ENCODE measurements at regions of chr2 and their contacts with region 1.

Region 1: DNA sequence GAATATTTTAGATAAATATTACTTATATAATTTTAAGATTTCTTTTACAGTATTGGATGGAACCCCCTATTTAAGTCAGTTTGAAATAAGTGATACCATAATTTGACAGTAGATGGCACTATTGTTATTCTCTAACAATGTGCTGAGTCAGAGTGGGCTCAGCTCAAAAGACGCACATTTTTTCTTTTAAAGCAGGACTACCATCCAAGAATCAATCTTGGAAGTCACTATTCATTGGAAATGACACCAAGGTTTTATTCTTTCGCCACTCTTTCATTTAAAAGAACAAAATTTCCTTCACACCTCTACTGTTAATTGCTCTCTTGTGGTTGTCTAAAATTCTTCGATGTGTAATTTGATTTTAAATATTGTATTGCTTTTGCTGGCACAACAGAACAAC is 32.6 kb upstream of the SPAG16 start:
- DNase-seq: peak in 2 of 4 donors; percentile 57 to 67
- ATAC-seq: peak; percentile 75
- H3K4me3 ChIP-seq: no peak overlapping the region
- H3K27ac ChIP-seq: no peak overlapping the region
- H3K4me1 ChIP-seq: no peaks in the 10 kb centered on the region
- H3K27me3 ChIP-seq: no peaks in the 10 kb centered on the region
- CTCF ChIP-seq: peak; percentile 44 to 66

Region 2: DNA sequence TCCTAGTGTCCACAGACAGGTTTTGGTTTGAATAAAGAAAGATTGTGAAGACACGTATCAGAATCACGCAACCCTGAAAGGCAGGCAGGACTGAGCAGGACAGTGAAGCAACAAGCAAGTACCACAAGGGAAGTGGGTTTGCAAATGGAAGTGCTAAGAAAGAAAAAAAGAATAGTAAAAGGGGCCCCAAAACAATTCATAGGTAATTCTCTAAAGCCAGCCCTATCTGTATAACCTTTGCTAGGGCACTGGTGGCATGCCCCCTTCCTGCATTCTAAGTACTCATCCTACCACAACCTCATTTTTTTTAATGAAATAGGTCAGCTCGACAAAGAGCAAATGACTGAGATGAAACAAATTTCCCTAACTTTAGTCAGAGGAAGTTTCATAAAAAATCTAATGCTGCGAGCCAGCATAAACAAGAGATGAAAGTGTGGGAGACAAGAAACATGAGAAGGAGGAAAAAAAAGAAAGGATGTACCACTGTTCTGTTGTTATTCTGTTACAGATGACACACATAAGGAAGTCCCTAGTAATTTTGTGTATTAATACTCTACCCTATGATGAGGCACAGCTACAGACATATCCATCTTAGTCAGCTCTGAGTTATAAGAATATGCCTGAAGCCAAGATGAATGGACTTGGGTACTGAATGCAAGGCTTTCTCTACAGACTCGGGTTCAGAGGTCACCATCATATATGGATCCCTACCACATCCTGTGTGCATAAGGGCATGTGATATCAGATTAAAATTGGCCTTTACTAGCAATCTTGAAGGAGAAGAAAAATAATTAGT is 132.4 kb before region 1 on chr2:
- intact Hi-C with region 1: no loop called
- DNase-seq: peak in 1 of 4 donors; percentile 29
- ATAC-seq: peak; percentile 62
- H3K4me3 ChIP-seq: no peak overlapping the region
- H3K27ac ChIP-seq: peak overlapping the region in 1 of 2 donors; percentile 35
- H3K4me1 ChIP-seq: peaks cover 0 to 13% of the 10 kb centered on the region in 2 donors
- H3K27me3 ChIP-seq: no peaks in the 10 kb centered on the region
- CTCF ChIP-seq: no peak

Region 3: DNA sequence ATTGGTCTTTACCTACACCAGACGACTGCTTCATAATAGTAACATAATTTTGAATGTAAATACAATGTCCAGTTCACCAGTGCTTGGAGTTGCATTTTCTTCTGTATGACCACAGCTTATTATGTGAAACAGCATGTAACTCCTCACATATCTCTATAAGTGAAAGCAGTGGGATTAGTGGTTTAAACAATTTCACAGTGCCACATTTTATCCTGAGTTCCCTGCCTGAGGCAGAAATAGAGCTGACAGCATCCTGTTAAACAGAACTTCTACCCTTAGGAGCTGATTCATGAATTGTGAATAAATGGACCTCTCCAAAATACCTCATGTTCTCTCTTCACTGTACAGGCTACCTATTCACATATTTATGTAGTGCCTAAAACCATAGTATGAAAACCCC is 616.9 kb after region 1 on chr2:
- intact Hi-C with region 1: loop called in 1 of 2 experiments (anchors 10 kb)
- DNase-seq: no peak
- ATAC-seq: no peak
- H3K4me3 ChIP-seq: no peak overlapping the region
- H3K27ac ChIP-seq: no peak overlapping the region
- H3K4me1 ChIP-seq: no peaks in the 10 kb centered on the region
- H3K27me3 ChIP-seq: no peaks in the 10 kb centered on the region
- CTCF ChIP-seq: no peak

Measured in left lung (tissue), 14 donors.